ENCODE measurements at regions of chr3 and their contacts with region 1.

Region 1: DNA sequence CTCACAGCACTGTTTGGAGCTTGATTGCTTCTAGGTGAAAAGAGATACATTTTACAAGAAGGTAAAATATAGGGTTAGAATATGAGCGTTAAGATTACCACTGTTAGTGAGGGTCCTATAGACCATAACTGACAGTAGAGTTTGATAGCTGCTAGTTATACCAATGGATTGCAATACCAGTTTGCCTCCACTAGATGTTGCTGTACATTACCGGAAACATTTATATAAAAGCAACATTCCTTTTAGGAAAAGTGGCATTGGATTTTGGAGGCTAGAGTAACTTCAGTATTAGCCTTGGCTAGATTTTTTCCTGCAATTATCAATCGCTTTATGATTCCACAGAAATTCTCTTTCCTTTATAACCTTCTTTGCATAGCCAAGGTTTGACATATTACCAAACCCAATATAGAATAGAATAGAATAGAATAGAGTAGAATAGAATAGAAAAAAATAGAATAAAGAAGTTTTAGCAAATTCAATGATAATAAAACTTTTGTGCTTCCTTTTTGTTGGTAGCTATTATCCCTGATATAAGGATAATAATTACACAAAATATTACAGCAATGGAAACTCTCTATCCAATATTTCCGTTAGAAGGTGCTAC is 1093.6 kb upstream of the ALCAM start:
- DNase-seq: no peak
- ATAC-seq: no peak

Region 2: DNA sequence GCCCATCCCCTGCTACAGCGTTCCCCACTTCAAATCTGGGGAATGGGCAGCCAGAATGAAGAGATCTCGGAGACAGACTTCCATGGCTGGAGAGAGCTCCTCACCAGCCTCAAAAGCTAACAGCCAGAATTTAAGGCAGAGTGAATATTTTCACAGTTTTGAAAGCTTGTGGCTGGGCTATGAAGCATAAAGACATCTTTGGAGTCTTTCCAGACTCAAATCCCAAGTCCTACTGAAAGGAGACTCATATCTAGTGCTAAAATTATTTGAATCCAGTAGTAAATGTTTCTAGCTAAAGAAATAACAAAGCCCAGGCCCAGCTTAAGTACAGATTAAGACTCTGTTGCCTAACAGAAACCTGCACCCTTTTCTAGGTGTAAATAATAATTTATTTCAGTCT is 465.1 kb after region 1 on chr3:
- intact Hi-C with region 1: no loop called
- DNase-seq: no peak
- ATAC-seq: no peak

Region 3: GRCh38 chr3:105518806-105519418 is 1245.8 kb after region 1 on chr3:
- intact Hi-C with region 1: loop called in 1 of 2 experiments (anchors 10 kb)
- DNase-seq: no peak
- ATAC-seq: peak; percentile 59

Measured in left colon (tissue), 2 donors.